PC-9 (cell line): ENCODE measurements at regions of chr3 and their contacts with region 1.

Region 1: DNA sequence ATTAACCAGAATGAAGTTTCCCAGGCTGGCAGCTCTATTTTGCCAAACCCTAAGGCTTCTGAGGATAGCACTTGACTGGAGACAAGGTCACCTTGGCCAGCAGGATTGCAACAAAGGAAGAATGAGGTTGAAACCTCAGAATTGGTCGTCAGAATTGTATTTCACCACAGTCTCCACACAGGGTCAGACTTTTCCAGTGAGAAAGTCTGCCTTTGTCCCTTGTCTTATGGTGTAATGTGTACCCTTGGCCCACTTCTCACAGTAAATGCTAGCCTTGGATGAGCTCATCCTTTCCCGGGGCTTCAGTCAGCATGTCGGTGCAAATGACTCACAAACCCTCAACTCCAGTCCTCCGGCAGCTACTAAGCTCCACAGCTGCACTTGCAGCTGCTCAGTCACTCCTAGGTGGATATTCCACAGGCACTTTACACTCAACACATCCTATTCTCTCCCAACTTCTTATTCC is 19.7 kb downstream of the SSR3 start:
- DNase-seq: peak; percentile 70 to 98
- H3K4me3 ChIP-seq: no peak overlapping the region
- H3K27ac ChIP-seq: peak overlapping the region; percentile 72
- H3K4me1 ChIP-seq: peaks cover 21% of the 10 kb centered on the region
- H3K27me3 ChIP-seq: no peaks in the 10 kb centered on the region
- CTCF ChIP-seq: peak; percentile 59

Region 2: GRCh38 chr3:156017352-156018030 is 517.7 kb before region 1 on chr3:
- CTCF ChIA-PET with region 1: no interaction called
- POLR2A ChIA-PET with region 1: no interaction called
- intact Hi-C with region 1: loop called (anchors 10 kb)
- DNase-seq: no peak
- H3K4me3 ChIP-seq: no peak overlapping the region
- H3K27ac ChIP-seq: no peak overlapping the region
- H3K4me1 ChIP-seq: no peaks in the 10 kb centered on the region
- H3K27me3 ChIP-seq: no peaks in the 10 kb centered on the region
- CTCF ChIP-seq: no peak

Region 3: DNA sequence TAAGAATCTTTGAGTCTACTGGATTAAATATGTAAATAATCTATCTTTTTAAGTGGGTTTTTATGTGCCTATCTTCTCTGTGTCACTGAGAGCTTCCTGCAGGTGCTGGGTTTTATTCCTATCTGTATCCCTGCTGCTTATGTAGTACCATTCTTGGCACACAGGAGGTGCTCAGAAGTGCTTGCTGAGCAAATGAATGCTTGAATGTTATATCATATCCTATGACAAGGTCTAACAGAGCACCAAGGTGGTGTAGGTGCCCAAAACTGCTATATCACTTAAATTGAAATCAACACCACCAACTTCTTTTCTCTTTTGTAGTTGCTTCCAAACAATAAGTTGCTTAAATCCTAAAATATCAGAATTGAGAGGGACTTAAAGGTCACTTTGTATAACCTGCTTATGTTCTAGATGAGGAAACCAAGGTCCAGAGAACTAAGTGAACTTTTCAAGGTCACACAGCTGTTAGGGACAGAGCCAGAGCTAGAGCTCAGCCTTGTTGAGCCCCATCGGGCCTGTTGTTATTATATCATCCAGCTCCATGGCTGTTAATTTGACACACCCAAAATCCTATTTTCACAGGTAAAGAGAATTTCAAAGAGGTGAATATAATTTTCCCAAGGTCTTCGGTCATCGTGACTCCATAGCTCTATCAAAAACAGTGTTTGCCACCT is 578.8 kb after region 1 on chr3:
- CTCF ChIA-PET with region 1: interaction called, 11 read pairs
- POLR2A ChIA-PET with region 1: no interaction called
- intact Hi-C with region 1: no loop called
- DNase-seq: no peak
- H3K4me3 ChIP-seq: no peak overlapping the region
- H3K27ac ChIP-seq: no peak overlapping the region
- H3K4me1 ChIP-seq: peaks cover 24% of the 10 kb centered on the region
- H3K27me3 ChIP-seq: no peaks in the 10 kb centered on the region
- CTCF ChIP-seq: 0 out of 2 replicates have a peak, but pooled peaks have one; percentile 25